H1 (cell line): ENCODE measurements at regions of chr16 and their contacts with region 1.

Region 1: GRCh38 chr16:87669672-87670071 is 67.4 kb downstream of the JPH3 start:
- DNase-seq: no peak
- H3K4me3 ChIP-seq: no peak overlapping the region
- H3K27ac ChIP-seq: no peak overlapping the region
- H3K4me1 ChIP-seq: no peaks in the 10 kb centered on the region
- H3K27me3 ChIP-seq: no peaks in the 10 kb centered on the region
- CTCF ChIP-seq: no peak
- EP300 ChIP-seq: no peak
- POLR2A ChIP-seq: no peak
- RAD21 ChIP-seq: no peak

Region 2: DNA sequence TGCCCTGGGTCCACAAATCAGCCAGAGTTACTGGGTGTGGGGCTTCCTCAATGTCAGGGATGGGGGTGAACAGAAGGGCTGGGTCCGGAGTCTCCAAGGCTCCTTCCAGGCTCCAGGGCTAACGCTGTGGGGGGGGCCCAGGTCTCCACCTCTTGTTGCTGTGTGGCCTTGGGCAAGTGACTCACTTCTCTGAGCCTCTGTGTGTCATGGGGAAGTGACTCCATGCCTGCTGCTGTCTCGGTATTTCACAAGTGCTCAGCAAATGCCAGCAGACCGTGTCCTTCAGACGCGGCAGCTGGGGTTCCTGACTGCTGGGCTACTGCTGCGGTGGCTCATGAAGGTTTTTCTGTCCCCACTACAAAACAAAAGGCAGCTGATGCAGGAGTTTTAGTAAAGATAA is 40.7 kb before region 1 on chr16:
- CTCF ChIA-PET with region 1: no interaction called
- POLR2A ChIA-PET with region 1: no interaction called
- DNase-seq: no peak
- H3K4me3 ChIP-seq: no peak overlapping the region
- H3K27ac ChIP-seq: no peak overlapping the region
- H3K4me1 ChIP-seq: no peaks in the 10 kb centered on the region; a peak in 2 of 7 replicates
- H3K27me3 ChIP-seq: no peaks in the 10 kb centered on the region
- CTCF ChIP-seq: no peak
- EP300 ChIP-seq: no peak
- POLR2A ChIP-seq: no peak
- RAD21 ChIP-seq: no peak

Region 3: GRCh38 chr16:87653234-87653633 is 16.4 kb before region 1 on chr16:
- CTCF ChIA-PET with region 1: interaction called, 15 read pairs
- POLR2A ChIA-PET with region 1: interaction called, 6 read pairs
- DNase-seq: no peak
- H3K4me3 ChIP-seq: no peak overlapping the region
- H3K27ac ChIP-seq: no peak overlapping the region
- H3K4me1 ChIP-seq: peaks cover 0 to 19% (median 4%) of the 10 kb centered on the region in 4 experiments; a peak in 4 of 7 replicates
- H3K27me3 ChIP-seq: no peaks in the 10 kb centered on the region
- CTCF ChIP-seq: peak; percentile 14 to 48 (median 33)
- EP300 ChIP-seq: no peak
- POLR2A ChIP-seq: no peak
- RAD21 ChIP-seq: peak; percentile 27 to 33; a peak in 3 of 4 replicates